Activated T-helper 2 cell treated with anti-CD3 and anti-CD28 coated beads, Interferon-gamma antibody, Interleukin-2, Interleukin-4, amounts not matched to agents 10 μg/mL and 5 μg/mL and 100 μg/mL, durations not matched to agents 14 hours and 24 hours and 36 hours (primary cell): ENCODE measurements at regions of chr20 and their contacts with region 1.

Region 1: GRCh38 chr20:31723319-31724078 is 831 bp upstream of the BCL2L1 start:
- DNase-seq: peak; percentile 96
- H3K4me3 Mint-ChIP-seq: peak overlapping the region; percentile 97
- H3K27ac Mint-ChIP-seq: peak overlapping the region; percentile 97
- H3K4me1 Mint-ChIP-seq: peaks cover 14% of the 10 kb centered on the region
- H3K27me3 Mint-ChIP-seq: no peaks in the 10 kb centered on the region

Region 2: GRCh38 chr20:31474097-31474436 is 249.4 kb before region 1 on chr20:
- intact Hi-C with region 1: no loop called
- DNase-seq: no peak
- H3K4me3 Mint-ChIP-seq: no peak overlapping the region
- H3K27ac Mint-ChIP-seq: no peak overlapping the region
- H3K4me1 Mint-ChIP-seq: peaks cover 6% of the 10 kb centered on the region
- H3K27me3 Mint-ChIP-seq: peaks cover 34% of the 10 kb centered on the region

Region 3: GRCh38 chr20:31514159-31515071 is 209.1 kb before region 1 on chr20 and contains the start of gene HM13:
- intact Hi-C with region 1: loop called (anchors 10 kb)
- DNase-seq: peak; percentile 86
- H3K4me3 Mint-ChIP-seq: peak within 1 kb of the TSS; percentile 61
- H3K27ac Mint-ChIP-seq: no peak within 1 kb of the TSS
- H3K4me1 Mint-ChIP-seq: peaks cover 2% of the 10 kb centered on the region
- H3K27me3 Mint-ChIP-seq: peaks cover 2% of the 10 kb centered on the region
- total RNA-seq, gene HM13: 184 and 188 TPM in 2 replicates

Region 4: GRCh38 chr20:31605031-31605901 is 118.2 kb before region 1 on chr20 and contains the start of gene ID1:
- intact Hi-C with region 1: loop called (anchors 2 kb)
- DNase-seq: peak; percentile 84
- H3K4me3 Mint-ChIP-seq: peak within 1 kb of the TSS; percentile 87
- H3K27ac Mint-ChIP-seq: peak within 1 kb of the TSS; percentile 53
- H3K4me1 Mint-ChIP-seq: peaks cover 23% of the 10 kb centered on the region
- H3K27me3 Mint-ChIP-seq: peaks cover 44% of the 10 kb centered on the region
- total RNA-seq, gene ID1: 1.5 and 2.1 TPM in 2 replicates

Region 5: DNA sequence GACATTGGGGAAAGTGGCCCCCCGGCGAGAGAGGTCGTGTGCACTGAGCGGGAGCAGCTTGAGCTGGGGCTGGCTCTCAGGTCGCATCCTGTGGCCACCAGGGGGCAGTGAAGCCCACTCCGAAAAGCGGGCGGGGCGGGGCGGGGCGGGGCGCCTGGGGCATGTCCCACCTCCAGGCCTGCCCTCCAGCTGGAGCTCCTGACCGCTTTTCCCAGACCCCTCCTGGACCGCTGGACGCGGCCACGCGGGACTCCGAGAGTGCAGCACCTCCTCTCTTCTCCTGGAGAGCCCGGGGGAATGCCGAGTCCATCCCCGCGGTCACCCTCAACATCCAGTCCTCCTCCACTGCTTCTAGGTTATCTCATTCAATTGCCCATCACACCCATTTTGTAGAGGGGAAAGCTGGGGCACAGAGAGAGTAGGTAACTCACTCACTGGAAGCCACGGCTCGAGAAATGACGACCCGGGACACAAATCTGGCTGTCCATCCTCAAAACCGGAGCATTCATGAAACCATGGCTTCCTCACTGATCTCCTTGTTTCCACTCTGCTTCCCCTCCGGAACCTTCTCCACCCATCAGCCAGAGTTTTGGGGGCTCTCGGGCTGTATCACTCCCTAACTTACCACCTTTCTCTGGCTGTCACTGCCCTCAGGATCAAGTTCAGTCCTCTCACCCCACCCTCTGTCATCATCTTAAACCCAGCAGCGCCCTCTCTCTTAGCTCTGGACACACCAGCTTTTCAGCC is 61.7 kb before region 1 on chr20:
- intact Hi-C with region 1: loop called (anchors 1 kb)
- DNase-seq: peak; percentile 61
- H3K4me3 Mint-ChIP-seq: peak overlapping the region; percentile 74
- H3K27ac Mint-ChIP-seq: peak overlapping the region; percentile 74
- H3K4me1 Mint-ChIP-seq: peaks cover 39% of the 10 kb centered on the region
- H3K27me3 Mint-ChIP-seq: no peaks in the 10 kb centered on the region

Region 6: GRCh38 chr20:31698803-31699718 is 24.4 kb before region 1 on chr20:
- intact Hi-C with region 1: loop called (anchors 1 kb)
- DNase-seq: no peak
- H3K4me3 Mint-ChIP-seq: peak overlapping the region; percentile 1
- H3K27ac Mint-ChIP-seq: peak overlapping the region; percentile 81
- H3K4me1 Mint-ChIP-seq: peaks cover 60% of the 10 kb centered on the region
- H3K27me3 Mint-ChIP-seq: no peaks in the 10 kb centered on the region

Region 7: DNA sequence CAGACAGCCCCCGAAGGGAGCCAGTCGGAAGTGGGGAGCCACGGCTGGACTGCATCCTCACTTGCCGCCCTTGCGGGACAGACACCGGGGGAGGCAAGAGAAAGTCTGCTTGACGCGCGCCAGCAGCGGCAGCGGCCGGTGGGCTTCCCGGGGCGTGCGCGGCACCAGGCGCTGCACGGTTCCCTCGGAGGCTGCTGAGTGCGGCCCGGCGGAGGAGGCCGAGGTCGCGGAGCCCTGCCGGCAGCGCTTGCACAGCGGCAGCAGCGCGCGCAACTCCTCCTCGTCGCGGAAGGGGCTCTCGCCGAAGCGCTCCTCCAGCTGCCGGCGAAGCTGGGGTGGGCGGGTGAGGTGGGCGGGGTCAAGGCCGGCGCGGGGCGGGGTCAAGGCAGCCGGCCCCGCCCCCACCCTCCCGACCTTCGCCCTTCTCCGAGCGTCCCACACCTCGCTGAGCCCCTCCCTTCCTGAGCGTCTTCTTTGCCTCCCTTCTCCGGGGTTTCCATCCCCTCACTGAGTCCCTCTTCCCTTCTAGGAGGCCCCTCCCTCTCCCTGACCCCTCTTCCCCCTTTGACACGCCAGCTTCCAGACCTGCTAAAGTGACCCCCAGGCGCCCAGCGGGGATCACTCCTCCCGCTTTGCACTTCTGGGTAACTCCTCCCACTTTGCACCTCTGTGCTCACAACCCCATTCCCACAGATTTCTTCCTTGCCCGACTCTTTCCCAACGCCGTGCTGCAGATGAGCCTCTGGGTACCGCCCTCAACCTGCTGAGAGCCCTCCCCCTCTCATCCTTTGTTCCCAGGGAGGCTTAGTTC is 138.1 kb after region 1 on chr20:
- intact Hi-C with region 1: no loop called
- DNase-seq: peak; percentile 56
- H3K4me3 Mint-ChIP-seq: peak overlapping the region; percentile 56
- H3K27ac Mint-ChIP-seq: no peak overlapping the region
- H3K4me1 Mint-ChIP-seq: peaks cover 8% of the 10 kb centered on the region
- H3K27me3 Mint-ChIP-seq: peaks cover 37% of the 10 kb centered on the region